Calu3 (cell line): ENCODE measurements at regions of chr3 and their contacts with region 1.

Region 1: GRCh38 chr3:42443819-42444436 is 33.5 kb upstream of the LYZL4 start:
- DNase-seq: peak; percentile 90
- H3K4me3 Mint-ChIP-seq: no peak overlapping the region
- H3K27ac Mint-ChIP-seq: no peak overlapping the region
- H3K4me1 Mint-ChIP-seq: peaks cover 9% of the 10 kb centered on the region
- H3K27me3 Mint-ChIP-seq: peaks cover 18% of the 10 kb centered on the region
- CTCF ChIP-seq: peak; percentile 78

Region 2: DNA sequence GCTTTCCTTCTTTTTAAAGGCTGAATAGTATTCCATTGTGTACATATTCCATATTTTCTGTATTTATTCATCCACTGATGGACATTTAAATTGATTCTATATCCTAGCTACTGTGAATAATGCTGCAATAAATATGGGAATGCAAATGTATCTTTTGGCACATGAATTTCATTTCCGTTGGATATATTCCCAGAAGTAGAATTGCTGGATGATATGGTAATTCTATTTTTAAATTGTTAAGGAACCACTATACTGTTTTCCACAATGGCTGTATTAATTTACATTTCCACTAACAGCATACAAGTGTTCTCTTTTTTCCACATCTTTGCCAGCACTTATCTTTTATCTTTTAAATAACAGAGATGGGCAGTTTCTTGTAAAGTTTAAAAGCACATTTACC is 941.9 kb before region 1 on chr3:
- CTCF ChIA-PET with region 1: no interaction called
- intact Hi-C with region 1: no loop called
- DNase-seq: no peak
- H3K4me3 Mint-ChIP-seq: no peak overlapping the region
- H3K27ac Mint-ChIP-seq: no peak overlapping the region
- H3K4me1 Mint-ChIP-seq: no peaks in the 10 kb centered on the region
- H3K27me3 Mint-ChIP-seq: no peaks in the 10 kb centered on the region
- CTCF ChIP-seq: no peak

Region 3: DNA sequence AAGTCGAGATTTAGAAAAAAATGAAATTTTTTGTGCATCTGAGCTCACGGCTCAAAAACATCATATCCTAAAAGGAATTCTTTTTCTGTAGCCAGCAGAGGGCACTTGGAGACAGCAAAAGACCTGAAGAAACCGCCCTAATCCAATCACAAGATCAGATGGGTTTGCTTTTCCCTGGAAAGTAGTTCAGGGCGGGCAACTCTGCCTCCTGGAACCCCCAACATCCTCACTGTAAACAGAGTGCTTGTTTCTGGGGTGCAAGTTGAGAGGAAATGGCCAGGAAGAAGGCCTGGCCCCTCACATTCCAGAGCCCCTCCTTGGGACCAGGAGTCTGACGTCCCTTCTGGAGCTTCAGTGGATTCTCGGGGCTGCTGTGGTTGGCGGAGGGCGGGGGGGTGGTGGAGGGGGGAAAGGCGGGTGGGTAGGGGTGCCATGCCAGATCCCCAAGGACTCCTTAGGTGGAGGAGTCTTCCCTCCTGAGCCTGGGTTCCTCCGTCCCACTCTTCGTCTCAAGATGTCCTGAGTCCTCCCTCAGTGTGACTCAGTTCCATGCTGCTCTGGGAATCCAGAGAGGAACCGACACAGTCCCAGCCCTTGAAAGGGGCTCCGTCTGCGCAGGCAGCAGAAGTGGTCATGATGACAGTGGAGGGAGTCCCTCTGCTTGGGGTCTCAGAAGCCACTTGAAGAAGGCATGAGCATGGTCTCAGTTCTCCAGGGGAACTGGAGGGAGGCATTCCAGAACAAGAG is 213.8 kb before region 1 on chr3:
- CTCF ChIA-PET with region 1: interaction called, 15 read pairs
- intact Hi-C with region 1: loop called (anchors 1 kb)
- DNase-seq: peak; percentile 49
- H3K4me3 Mint-ChIP-seq: no peak overlapping the region
- H3K27ac Mint-ChIP-seq: no peak overlapping the region
- H3K4me1 Mint-ChIP-seq: no peaks in the 10 kb centered on the region
- H3K27me3 Mint-ChIP-seq: peaks cover 27% of the 10 kb centered on the region
- CTCF ChIP-seq: no peak

Region 4: GRCh38 chr3:42247576-42248027 is 196.3 kb before region 1 on chr3:
- CTCF ChIA-PET with region 1: interaction called, 30 read pairs
- intact Hi-C with region 1: loop called (anchors 1 kb)
- DNase-seq: peak; percentile 73
- H3K4me3 Mint-ChIP-seq: no peak overlapping the region
- H3K27ac Mint-ChIP-seq: no peak overlapping the region
- H3K4me1 Mint-ChIP-seq: no peaks in the 10 kb centered on the region
- H3K27me3 Mint-ChIP-seq: peaks cover 46% of the 10 kb centered on the region
- CTCF ChIP-seq: peak; percentile 75

Region 5: GRCh38 chr3:42507252-42507651 is 63.3 kb after region 1 on chr3:
- CTCF ChIA-PET with region 1: interaction called, 4 read pairs
- intact Hi-C with region 1: loop called (anchors 5 kb)
- DNase-seq: peak; percentile 60
- H3K4me3 Mint-ChIP-seq: no peak overlapping the region
- H3K27ac Mint-ChIP-seq: peak overlapping the region; percentile 75
- H3K4me1 Mint-ChIP-seq: peaks cover 22% of the 10 kb centered on the region
- H3K27me3 Mint-ChIP-seq: no peaks in the 10 kb centered on the region
- CTCF ChIP-seq: no peak